Motor neuron (in vitro differentiated cells): ENCODE measurements at regions of chr2 and their contacts with region 1.

Region 1: GRCh38 chr2:85826990-85827878 is 61.6 kb downstream of the ST3GAL5 start:
- ATAC-seq: peak; percentile 96 to 100 (median 98)
- H3K4me3 ChIP-seq: peak overlapping the region in 1 of 5 donors; percentile 6
- H3K27ac ChIP-seq: no peak overlapping the region
- H3K4me1 ChIP-seq: peaks cover 0 to 5% of the 10 kb centered on the region in 2 donors

Region 2: DNA sequence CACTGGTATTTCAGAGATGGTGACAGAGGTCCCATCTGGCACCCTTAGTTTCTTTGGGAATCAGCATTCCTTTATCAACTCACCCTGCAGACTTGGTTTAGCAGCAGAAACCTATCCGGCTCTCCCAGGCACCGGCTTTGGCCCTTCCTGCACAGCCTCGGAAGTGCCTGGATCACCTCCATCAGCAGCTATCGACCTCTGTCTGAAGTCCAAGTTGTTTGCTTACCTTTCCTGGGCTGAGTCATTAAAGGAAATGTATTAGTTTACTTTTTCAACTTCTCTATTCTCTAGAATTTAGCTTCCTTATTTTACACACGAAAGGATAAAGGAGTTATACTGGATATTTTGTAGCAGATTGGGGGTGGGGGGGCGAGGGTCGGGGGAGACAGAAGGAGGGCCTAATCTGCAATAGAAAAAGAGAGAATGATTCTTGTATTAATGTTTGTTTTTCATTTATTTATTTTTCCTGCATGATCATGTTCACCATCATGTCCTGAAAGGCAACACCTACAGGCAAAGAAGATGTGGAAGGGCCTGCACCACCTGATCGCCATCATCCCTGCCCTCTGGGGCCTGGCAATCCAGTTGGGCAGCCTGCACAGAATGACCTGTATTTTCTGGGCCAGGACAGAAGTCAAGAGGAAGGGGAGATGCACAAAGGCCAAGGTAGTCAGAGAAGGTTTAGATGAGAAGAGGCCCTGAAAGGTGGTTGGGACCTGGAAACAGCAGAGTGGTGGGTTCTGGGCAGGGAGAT is 310.4 kb before region 1 on chr2:
- in situ Hi-C with region 1: no loop called
- ATAC-seq: no peak
- H3K4me3 ChIP-seq: no peak overlapping the region
- H3K27ac ChIP-seq: no peak overlapping the region
- H3K4me1 ChIP-seq: no peaks in the 10 kb centered on the region

Region 3: DNA sequence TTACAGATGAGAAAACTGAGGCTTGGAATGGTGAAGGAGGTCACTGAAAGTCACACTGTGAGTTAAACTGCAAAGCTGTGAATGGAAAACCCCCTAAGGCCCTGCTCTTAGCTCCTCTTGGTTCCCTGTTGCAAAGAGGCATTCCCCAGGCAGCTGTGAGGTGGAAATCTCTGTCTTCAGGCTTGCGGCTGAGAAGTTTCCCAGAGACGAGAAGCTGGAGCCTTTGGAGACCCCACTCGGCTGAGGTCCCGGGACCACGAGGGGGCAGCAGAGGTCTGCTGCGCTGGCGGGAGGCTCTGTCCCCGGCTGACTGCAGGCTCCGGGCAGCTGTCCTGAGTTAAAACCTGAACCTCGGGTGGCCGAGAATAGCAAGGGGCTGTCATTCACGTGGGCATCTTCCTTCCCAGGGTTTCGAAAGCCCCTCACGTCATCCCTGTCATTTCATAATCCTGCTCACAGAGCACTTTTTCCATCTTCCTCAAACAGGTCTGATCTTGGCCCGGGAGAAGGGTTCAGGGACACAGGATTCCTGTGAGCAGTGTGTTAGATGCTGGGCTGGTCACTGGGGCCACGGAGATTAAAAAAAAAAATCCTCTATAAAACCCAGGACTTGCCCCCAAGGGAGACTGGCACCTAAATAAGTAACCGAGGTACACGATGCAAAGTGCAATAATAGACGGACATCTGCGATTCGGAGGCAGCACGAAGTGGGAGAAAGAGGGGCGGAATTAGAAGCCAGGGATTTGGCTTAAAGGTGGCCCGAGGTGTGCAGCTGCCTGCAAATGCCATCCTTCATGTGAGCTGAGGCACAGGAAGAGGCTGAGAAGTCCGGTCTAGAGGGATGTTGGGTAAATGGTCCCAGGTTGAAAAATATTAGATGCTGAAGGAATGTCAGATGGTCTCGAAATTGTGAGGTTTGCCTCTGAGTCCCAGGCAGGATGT is 98.1 kb before region 1 on chr2:
- in situ Hi-C with region 1: loop called in 2 of 9 experiments (anchors 25 kb)
- ATAC-seq: peak; percentile 96 to 100 (median 100)
- H3K4me3 ChIP-seq: no peak overlapping the region
- H3K27ac ChIP-seq: no peak overlapping the region
- H3K4me1 ChIP-seq: peaks cover 0 to 10% of the 10 kb centered on the region in 2 donors

Region 4: DNA sequence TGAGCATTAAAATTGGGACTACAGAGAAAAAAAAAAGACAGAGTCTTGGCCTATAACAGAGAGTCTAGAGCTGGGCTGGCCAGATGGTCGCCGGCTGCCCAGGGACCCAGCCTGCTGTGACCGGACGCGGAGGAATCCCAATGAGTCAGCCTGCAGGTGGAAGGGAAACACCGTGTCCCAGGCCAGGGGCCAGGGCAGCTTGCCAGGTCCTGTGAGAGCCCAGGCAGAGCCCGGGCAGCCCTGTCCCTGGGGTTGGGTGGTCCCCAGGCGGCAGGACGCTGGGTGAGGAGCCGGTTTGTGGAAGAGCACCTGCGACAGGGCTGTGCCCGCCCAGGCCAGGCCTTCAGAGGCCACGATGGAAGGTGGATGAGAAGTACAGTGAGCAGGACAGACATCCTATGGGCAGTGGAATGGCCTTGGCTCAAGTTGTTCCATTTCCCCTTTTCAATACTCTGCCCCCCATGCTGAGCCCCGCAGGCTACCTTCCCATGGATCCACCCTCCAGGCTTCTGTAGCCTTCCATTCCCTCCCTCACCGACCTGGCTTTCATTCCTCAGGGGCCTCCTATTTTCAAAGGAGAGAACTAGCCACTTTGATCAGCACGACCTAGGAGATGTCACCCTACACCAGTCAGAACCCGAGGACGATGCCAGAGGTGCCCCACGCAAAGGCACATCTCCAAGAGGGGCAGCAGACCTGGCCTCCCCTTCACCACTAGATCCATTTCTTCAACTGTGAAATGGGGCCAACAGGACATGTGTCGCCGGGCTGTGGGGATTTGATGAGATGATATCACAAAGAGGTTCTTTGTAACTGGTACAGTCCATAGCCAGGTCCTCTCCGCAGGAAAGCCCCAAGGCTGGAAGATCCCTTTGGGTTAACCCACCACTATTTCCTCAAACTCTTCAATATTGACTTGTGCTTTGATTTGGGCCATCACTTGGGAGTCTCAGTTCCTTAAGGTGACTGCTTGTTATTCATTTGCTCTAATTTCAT is 191.0 kb after region 1 on chr2:
- in situ Hi-C with region 1: loop called in 1 of 9 experiments (anchors 25 kb)
- ATAC-seq: peak in 6 of 8 experiments; percentile 18 to 75 (median 58)
- H3K4me3 ChIP-seq: no peak overlapping the region
- H3K27ac ChIP-seq: no peak overlapping the region
- H3K4me1 ChIP-seq: no peaks in the 10 kb centered on the region

Region 5: GRCh38 chr2:86035883-86036668 is 208.8 kb after region 1 on chr2:
- in situ Hi-C with region 1: loop called in 1 of 9 experiments (anchors 25 kb)
- ATAC-seq: peak; percentile 73 to 89 (median 84)
- H3K4me3 ChIP-seq: no peak overlapping the region
- H3K27ac ChIP-seq: peak overlapping the region; percentile 26 to 71
- H3K4me1 ChIP-seq: peaks cover 11 to 23% of the 10 kb centered on the region in 2 donors

Region 6: DNA sequence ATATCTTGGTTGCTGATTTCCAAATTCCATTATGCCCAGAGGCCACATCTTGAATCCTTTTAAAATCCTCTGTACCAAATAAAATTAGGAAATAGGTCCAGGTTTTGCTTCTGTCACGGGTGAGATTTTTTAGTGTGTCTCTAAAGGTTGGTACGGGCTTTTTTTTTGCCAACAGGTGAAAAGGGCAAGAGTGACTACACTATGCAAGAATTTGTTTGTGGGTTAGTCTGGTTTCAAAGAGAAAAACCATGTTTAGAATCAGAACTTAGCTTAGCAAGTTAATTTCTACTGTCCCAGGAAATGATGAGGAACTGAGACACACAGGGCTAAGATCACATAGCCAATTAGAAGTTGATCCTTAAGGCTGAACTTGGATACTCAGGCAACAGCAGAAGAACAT is 236.8 kb after region 1 on chr2:
- in situ Hi-C with region 1: no loop called
- ATAC-seq: no peak
- H3K4me3 ChIP-seq: no peak overlapping the region
- H3K27ac ChIP-seq: no peak overlapping the region
- H3K4me1 ChIP-seq: no peaks in the 10 kb centered on the region

Region 7: GRCh38 chr2:86079981-86080911 is 253.0 kb after region 1 on chr2:
- in situ Hi-C with region 1: loop called in 5 of 9 experiments (anchors 5 to 25 kb)
- ATAC-seq: peak; percentile 80 to 94 (median 86)
- H3K4me3 ChIP-seq: no peak overlapping the region
- H3K27ac ChIP-seq: no peak overlapping the region
- H3K4me1 ChIP-seq: no peaks in the 10 kb centered on the region